HepG2 (cell line): ENCODE measurements at regions of chr12 and their contacts with region 1.

Region 1: DNA sequence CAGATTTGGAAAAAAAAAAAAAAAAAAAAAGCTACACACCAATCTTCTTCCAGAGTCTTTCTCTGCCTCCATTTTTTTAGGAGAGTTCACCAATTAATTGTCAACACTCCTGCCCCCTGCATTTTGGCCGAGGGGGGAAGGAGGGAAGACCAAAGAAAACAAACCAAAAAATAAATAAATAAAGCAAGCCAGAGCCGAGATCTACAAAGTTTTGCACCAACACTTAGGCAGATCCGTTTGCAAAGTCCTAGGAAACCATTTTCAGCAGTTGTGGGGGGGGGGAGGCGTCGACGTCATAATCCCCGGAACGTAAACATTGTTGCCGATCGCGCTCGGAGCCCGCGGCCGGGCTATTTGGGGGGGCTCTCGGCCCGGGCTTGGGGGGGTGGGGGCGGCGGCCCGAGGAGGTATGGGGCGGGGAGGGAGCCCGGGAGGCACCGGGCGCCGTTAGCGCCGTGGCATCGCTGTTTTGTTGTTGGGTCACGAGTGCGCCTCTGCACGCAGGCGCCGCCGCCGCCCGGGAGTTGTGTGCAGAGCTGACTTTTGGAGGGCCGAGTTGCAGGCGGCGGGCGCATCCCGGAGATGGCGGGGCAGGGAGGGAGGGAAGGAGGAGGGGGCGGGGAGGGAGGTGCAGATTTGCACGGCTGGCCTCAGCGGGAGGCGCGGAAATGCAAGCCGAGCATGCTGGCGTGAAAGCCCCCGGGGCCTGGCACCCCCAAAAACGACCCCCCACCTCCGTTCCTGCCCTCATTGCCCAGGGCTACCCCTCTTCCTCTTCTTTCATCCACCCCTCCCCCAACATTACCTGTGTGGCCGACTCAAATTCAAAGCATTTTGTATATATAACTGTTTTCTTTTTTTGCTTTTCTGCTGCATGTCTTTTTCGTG is 598 bp downstream of the KDM2B start:
- DNase-seq: peak; percentile 34
- ATAC-seq: peak; percentile 66
- H3K4me3 ChIP-seq: peak overlapping the region; percentile 70 to 87 (median 74)
- H3K27ac ChIP-seq: peak overlapping the region; percentile 62
- H3K4me1 ChIP-seq: peaks cover 57% of the 10 kb centered on the region
- H3K27me3 ChIP-seq: no peaks in the 10 kb centered on the region
- CTCF ChIP-seq: no peak
- EP300 ChIP-seq: no peak
- POLR2A ChIP-seq: no peak
- RAD21 ChIP-seq: no peak

Region 2: GRCh38 chr12:121543786-121544185 is 36.4 kb before region 1 on chr12:
- CTCF ChIA-PET with region 1: no interaction called
- POLR2A ChIA-PET with region 1: no interaction called
- in situ Hi-C with region 1: no loop called
- intact Hi-C with region 1: no loop called
- DNase-seq: no peak
- ATAC-seq: no peak
- H3K4me3 ChIP-seq: no peak overlapping the region
- H3K27ac ChIP-seq: no peak overlapping the region
- H3K4me1 ChIP-seq: peaks cover 20% of the 10 kb centered on the region
- H3K27me3 ChIP-seq: no peaks in the 10 kb centered on the region
- CTCF ChIP-seq: no peak
- EP300 ChIP-seq: no peak
- POLR2A ChIP-seq: no peak
- RAD21 ChIP-seq: no peak

Region 3: DNA sequence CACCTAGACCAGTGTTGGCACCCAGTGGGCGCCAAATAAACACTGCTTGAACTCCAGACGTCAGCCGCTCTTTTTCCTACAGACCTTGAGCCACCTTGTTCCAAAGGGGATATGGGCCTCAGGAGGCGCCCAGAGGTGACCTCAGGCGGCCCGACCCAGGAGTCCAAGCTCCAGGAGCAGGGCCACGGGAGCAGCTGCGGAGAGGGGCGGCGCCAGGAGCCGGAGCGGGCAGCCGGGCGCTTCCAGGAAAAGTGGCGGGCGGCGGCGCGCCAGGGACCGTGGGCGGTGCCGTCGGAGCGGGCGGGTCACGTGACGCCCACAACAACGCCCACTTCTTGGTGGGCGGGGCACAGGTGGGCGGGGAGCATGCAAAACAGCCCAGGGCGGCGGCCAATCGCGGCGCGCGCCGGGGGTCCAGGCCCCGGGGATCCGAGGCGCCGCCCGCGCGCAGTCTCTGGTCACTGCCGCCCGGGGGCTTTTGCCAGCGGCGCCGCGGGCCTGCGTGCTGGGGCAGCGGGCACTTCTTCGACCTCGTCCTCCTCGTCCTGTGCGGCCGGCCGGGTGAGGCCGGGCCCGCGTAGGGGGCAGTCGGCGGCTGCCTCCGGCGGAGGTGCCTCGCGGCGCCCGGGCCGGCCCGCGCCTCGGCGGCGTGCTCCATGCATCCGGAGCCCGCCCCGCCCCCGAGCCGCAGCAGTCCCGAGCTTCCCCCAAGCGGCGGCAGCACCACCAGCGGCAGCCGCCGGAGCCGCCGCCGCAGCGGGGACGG is 46.0 kb after region 1 on chr12 and contains the start of gene ORAI1:
- CTCF ChIA-PET with region 1: no interaction called
- POLR2A ChIA-PET with region 1: interaction called, 5 read pairs
- in situ Hi-C with region 1: no loop called
- intact Hi-C with region 1: loop called (anchors 2 kb)
- DNase-seq: peak; percentile 81
- ATAC-seq: peak; percentile 80
- H3K4me3 ChIP-seq: peak within 1 kb of the TSS; percentile 62 to 78 (median 70)
- H3K27ac ChIP-seq: peak within 1 kb of the TSS; percentile 82
- H3K4me1 ChIP-seq: peaks cover 59% of the 10 kb centered on the region
- H3K27me3 ChIP-seq: no peaks in the 10 kb centered on the region
- CTCF ChIP-seq: no peak; the same call in 1 of the 2 replicates
- EP300 ChIP-seq: peak in 1 of 2 experiments; percentile 37; a peak in 1 of 4 replicates
- POLR2A ChIP-seq: peak; percentile 77 to 91
- RAD21 ChIP-seq: peak; percentile 52; the same call in 1 of the 2 replicates
- total RNA-seq, gene ORAI1: 5.9 and 9.2 TPM in 2 replicates

Region 4: GRCh38 chr12:121773011-121773777 is 193.0 kb after region 1 on chr12:
- CTCF ChIA-PET with region 1: no interaction called
- POLR2A ChIA-PET with region 1: no interaction called
- in situ Hi-C with region 1: no loop called
- intact Hi-C with region 1: no loop called
- DNase-seq: peak; percentile 61
- ATAC-seq: peak; percentile 62
- H3K4me3 ChIP-seq: no peak overlapping the region
- H3K27ac ChIP-seq: no peak overlapping the region
- H3K4me1 ChIP-seq: peaks cover 35% of the 10 kb centered on the region
- H3K27me3 ChIP-seq: no peaks in the 10 kb centered on the region
- CTCF ChIP-seq: peak; percentile 97
- EP300 ChIP-seq: no peak
- POLR2A ChIP-seq: no peak
- RAD21 ChIP-seq: peak; percentile 95